ENCODE measurements at regions of chr6 and their contacts with region 1.

Region 1: GRCh38 chr6:31665501-31666336 is at the start of gene CSNK2B:
- DNase-seq: peak; percentile 99
- ATAC-seq: peak; percentile 88
- H3K4me3 Mint-ChIP-seq: peak within 1 kb of the TSS; percentile 98
- H3K27ac Mint-ChIP-seq: peak within 1 kb of the TSS; percentile 97
- H3K4me1 Mint-ChIP-seq: peaks cover 61% of the 10 kb centered on the region
- H3K27me3 Mint-ChIP-seq: no peaks in the 10 kb centered on the region
- CTCF ChIP-seq: no peak
- total RNA-seq, gene CSNK2B: 241 to 247 TPM

Region 2: GRCh38 chr6:31453259-31453658 is 212.5 kb before region 1 on chr6:
- CTCF ChIA-PET with region 1: no interaction called
- POLR2A ChIA-PET with region 1: no interaction called
- intact Hi-C with region 1: no loop called
- DNase-seq: no peak
- ATAC-seq: no peak
- H3K4me3 Mint-ChIP-seq: no peak overlapping the region
- H3K27ac Mint-ChIP-seq: no peak overlapping the region
- H3K4me1 Mint-ChIP-seq: no peaks in the 10 kb centered on the region
- H3K27me3 Mint-ChIP-seq: peaks cover 10% of the 10 kb centered on the region
- CTCF ChIP-seq: no peak

Region 3: DNA sequence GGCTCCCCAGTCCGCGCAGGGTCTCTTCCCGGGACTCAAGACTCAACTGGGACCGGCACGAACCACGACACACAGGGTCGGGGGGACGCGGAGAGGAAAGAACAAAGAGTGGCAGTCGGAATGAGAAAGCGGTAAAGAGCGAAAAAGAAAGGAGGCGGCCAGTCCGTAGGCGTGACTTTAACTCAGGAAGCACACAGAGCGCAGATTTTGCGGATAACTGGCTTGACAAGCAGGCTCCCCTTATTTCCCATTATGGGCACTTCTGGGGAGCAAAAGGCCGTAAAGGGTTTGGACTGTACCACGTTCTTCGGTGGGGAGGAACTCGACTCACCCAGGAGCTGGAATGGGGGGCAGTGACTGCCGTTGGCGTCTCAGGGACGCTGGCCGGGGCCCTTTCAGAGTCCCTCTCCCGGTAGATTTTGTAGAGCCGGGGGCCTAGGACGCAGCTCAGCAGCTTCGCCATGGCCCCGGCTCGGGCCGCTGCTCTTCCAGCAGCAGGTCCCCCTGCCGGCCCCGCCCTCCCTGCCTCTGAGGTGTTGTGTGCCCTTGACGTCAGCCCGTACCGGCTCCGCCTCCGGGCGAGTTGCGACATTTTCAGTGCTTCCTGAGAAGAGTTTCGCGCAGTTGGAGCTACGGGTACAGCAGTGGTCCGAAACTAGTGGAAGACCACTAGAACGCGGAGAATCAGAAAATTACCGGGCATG is 37.3 kb after region 1 on chr6 and contains the start of gene ABHD16A:
- CTCF ChIA-PET with region 1: interaction called, 3 read pairs
- POLR2A ChIA-PET with region 1: interaction called, 13 read pairs
- intact Hi-C with region 1: no loop called
- DNase-seq: peak; percentile 99
- ATAC-seq: peak; percentile 95
- H3K4me3 Mint-ChIP-seq: peak within 1 kb of the TSS; percentile 95
- H3K27ac Mint-ChIP-seq: peak within 1 kb of the TSS; percentile 94
- H3K4me1 Mint-ChIP-seq: peaks cover 22% of the 10 kb centered on the region
- H3K27me3 Mint-ChIP-seq: no peaks in the 10 kb centered on the region
- CTCF ChIP-seq: no peak
- total RNA-seq, gene ABHD16A: 23.7 to 24.3 TPM